ENCODE measurements at regions of chr3 and their contacts with region 1.

Region 1: GRCh38 chr3:110314512-110315114 is 757.0 kb upstream of the NECTIN3 start:
- DNase-seq: peak in 5 of 10 donors; percentile 18 to 47 (median 23)

Region 2: DNA sequence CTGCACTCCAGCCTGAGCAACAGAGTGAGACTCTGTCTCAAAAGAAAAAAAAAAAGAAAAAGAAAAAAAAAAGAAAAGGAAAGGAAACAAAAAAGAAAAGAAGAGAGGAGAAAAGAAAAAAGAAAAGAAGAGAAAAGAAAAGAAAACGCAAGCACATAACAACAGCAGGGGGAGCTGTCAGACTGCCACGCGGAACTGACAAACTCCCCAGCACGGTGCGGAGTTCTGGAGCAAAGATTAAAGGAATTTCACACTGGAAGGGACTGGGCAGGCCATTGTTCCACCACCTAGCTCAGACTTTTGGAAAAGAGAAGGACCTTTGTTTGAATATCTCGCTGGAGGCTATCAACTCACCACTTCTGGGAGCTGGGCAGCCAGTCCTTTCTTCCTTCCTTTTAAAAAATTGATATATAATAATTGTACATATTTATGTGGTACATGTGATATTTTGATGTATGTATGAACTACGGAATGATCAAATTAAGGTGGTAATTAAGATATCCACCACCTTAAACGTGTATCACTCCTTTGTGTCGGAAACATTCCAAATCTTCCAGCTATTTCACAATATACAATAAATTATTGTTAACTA is 1038.8 kb before region 1 on chr3:
- intact Hi-C with region 1: loop called (anchors 10 kb)
- DNase-seq: peak in 6 of 10 donors; percentile 17 to 87 (median 32)

Region 3: GRCh38 chr3:109532257-109533216 is 782.1 kb before region 1 on chr3:
- intact Hi-C with region 1: loop called (anchors 10 kb)
- DNase-seq: peak in 5 of 10 donors; percentile 28 to 89 (median 40)

Region 4: GRCh38 chr3:109731620-109732473 is 582.8 kb before region 1 on chr3:
- intact Hi-C with region 1: loop called (anchors 10 kb)
- DNase-seq: peak in 3 of 10 donors; percentile 10 to 51 (median 31)

Region 5: GRCh38 chr3:110767838-110768237 is 453.2 kb after region 1 on chr3:
- intact Hi-C with region 1: no loop called
- DNase-seq: no peak

Measured in posterior cingulate gyrus (tissue), 11 donors.